ENCODE measurements at regions of chr10 and their contacts with region 1.

Region 1: GRCh38 chr10:63157845-63158624 is 24.9 kb downstream of the NRBF2 start:
- DNase-seq: peak; percentile 29
- H3K4me3 Mint-ChIP-seq: no peak overlapping the region
- H3K27ac Mint-ChIP-seq: no peak overlapping the region
- H3K4me1 Mint-ChIP-seq: peaks cover 24% of the 10 kb centered on the region
- H3K27me3 Mint-ChIP-seq: no peaks in the 10 kb centered on the region

Region 2: GRCh38 chr10:62268399-62269114 is 889.5 kb before region 1 on chr10 and contains the start of gene RTKN2:
- intact Hi-C with region 1: loop called (anchors 5 kb)
- DNase-seq: peak; percentile 75
- H3K4me3 Mint-ChIP-seq: peak within 1 kb of the TSS; percentile 83
- H3K27ac Mint-ChIP-seq: no peak within 1 kb of the TSS
- H3K4me1 Mint-ChIP-seq: peaks cover 32% of the 10 kb centered on the region
- H3K27me3 Mint-ChIP-seq: peaks cover 27% of the 10 kb centered on the region
- total RNA-seq, gene RTKN2: 3.0 and 3.7 TPM in 2 replicates

Region 3: GRCh38 chr10:62492012-62492869 is 665.8 kb before region 1 on chr10:
- intact Hi-C with region 1: loop called (anchors 1 kb)
- DNase-seq: no peak
- H3K4me3 Mint-ChIP-seq: no peak overlapping the region
- H3K27ac Mint-ChIP-seq: no peak overlapping the region
- H3K4me1 Mint-ChIP-seq: no peaks in the 10 kb centered on the region
- H3K27me3 Mint-ChIP-seq: peaks cover 18% of the 10 kb centered on the region

Region 4: DNA sequence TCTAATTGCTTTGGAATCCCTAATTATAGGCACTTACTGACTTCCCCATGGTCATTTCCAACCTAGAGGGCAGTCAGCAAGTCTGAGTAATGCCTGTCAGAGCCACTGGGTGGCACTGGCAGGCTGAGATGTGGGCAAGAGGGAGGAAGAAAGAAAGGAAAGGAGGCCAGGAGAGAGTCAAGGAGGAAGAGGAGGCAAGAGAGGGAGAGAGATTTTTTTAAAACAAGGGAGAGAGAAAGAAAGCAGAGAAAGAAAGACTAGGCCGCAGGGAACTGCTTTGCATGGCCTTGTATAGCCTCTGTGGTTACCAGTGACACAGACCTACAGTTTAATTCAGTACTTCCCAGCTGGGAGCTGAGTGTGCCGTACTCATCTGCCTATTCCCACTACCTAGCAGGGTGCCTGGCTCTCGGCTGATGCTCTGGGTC is 563.9 kb before region 1 on chr10:
- intact Hi-C with region 1: loop called (anchors 1 kb)
- DNase-seq: peak; percentile 27
- H3K4me3 Mint-ChIP-seq: no peak overlapping the region
- H3K27ac Mint-ChIP-seq: no peak overlapping the region
- H3K4me1 Mint-ChIP-seq: peaks cover 19% of the 10 kb centered on the region
- H3K27me3 Mint-ChIP-seq: peaks cover 23% of the 10 kb centered on the region

Region 5: GRCh38 chr10:62851442-62851841 is 306.6 kb before region 1 on chr10:
- intact Hi-C with region 1: loop called (anchors 1 kb)
- DNase-seq: no peak
- H3K4me3 Mint-ChIP-seq: no peak overlapping the region
- H3K27ac Mint-ChIP-seq: peak overlapping the region; percentile 9
- H3K4me1 Mint-ChIP-seq: peaks cover 51% of the 10 kb centered on the region
- H3K27me3 Mint-ChIP-seq: peaks cover 5% of the 10 kb centered on the region

Region 6: GRCh38 chr10:63133056-63133820 is 24.8 kb before region 1 on chr10 and contains the start of gene NRBF2:
- intact Hi-C with region 1: loop called (anchors 1 kb)
- DNase-seq: peak; percentile 97
- H3K4me3 Mint-ChIP-seq: peak within 1 kb of the TSS; percentile 91
- H3K27ac Mint-ChIP-seq: peak within 1 kb of the TSS; percentile 83
- H3K4me1 Mint-ChIP-seq: peaks cover 32% of the 10 kb centered on the region
- H3K27me3 Mint-ChIP-seq: peaks cover 3% of the 10 kb centered on the region
- total RNA-seq, gene NRBF2: 30.0 and 30.8 TPM in 2 replicates